Naive thymus-derived CD4-positive, alpha-beta T cell (primary cell): ENCODE measurements at regions of chr9 and their contacts with region 1.

Region 1: GRCh38 chr9:4277531-4277991 is 22.3 kb downstream of the GLIS3 start:
- DNase-seq: no peak
- ATAC-seq: no peak
- H3K4me3 ChIP-seq: no peak overlapping the region
- H3K4me3 Mint-ChIP-seq: no peak overlapping the region
- H3K27ac ChIP-seq: no peak overlapping the region
- H3K27ac Mint-ChIP-seq: no peak overlapping the region
- H3K4me1 ChIP-seq: no peaks in the 10 kb centered on the region
- H3K4me1 Mint-ChIP-seq: peaks cover 0 to 8% (median 6%) of the 10 kb centered on the region in 7 donors
- H3K27me3 ChIP-seq: no peaks in the 10 kb centered on the region
- H3K27me3 Mint-ChIP-seq: peaks cover 0 to 11% (median 8%) of the 10 kb centered on the region in 5 donors

Region 2: DNA sequence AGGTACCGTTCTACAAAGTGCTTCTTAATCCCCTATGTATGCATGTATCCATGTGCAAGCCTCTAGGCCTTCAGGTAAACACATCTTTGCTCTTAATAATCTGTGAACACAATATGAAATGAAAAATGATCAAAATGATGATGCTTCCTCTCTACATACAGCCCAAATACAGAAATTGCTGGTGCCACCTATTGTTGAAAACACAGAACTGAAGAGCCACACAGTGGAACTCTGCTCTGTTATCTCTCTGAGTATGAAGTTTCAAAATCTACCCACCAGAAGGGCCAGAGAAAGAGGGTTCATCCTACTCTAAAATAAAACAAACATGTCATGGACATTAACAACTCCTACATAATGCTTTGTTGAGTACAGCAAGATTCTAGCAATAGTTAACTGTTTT is 49.0 kb before region 1 on chr9:
- CTCF ChIA-PET with region 1: no interaction called
- POLR2A ChIA-PET with region 1: no interaction called
- intact Hi-C with region 1: loop called in 1 of 2 experiments (anchors 5 kb)
- DNase-seq: peak in 1 of 9 donors; percentile 16
- ATAC-seq: peak; percentile 22
- H3K4me3 ChIP-seq: no peak overlapping the region
- H3K4me3 Mint-ChIP-seq: no peak overlapping the region
- H3K27ac ChIP-seq: no peak overlapping the region
- H3K27ac Mint-ChIP-seq: no peak overlapping the region
- H3K4me1 ChIP-seq: no peaks in the 10 kb centered on the region
- H3K4me1 Mint-ChIP-seq: peaks cover 0 to 28% (median 4%) of the 10 kb centered on the region in 7 donors
- H3K27me3 ChIP-seq: no peaks in the 10 kb centered on the region
- H3K27me3 Mint-ChIP-seq: peaks cover 0 to 10% (median 2%) of the 10 kb centered on the region in 5 donors

Region 3: GRCh38 chr9:4344946-4345345 is 67.4 kb after region 1 on chr9:
- CTCF ChIA-PET with region 1: no interaction called
- POLR2A ChIA-PET with region 1: no interaction called
- intact Hi-C with region 1: no loop called
- DNase-seq: peak in 1 of 9 donors; percentile 27
- ATAC-seq: no peak
- H3K4me3 ChIP-seq: no peak overlapping the region
- H3K4me3 Mint-ChIP-seq: no peak overlapping the region
- H3K27ac ChIP-seq: no peak overlapping the region
- H3K27ac Mint-ChIP-seq: peak overlapping the region in 1 of 9 donors; percentile 2
- H3K4me1 ChIP-seq: no peaks in the 10 kb centered on the region
- H3K4me1 Mint-ChIP-seq: peaks cover 0 to 18% (median 6%) of the 10 kb centered on the region in 7 donors
- H3K27me3 ChIP-seq: no peaks in the 10 kb centered on the region
- H3K27me3 Mint-ChIP-seq: peaks cover 0 to 8% (median 0%) of the 10 kb centered on the region in 5 donors